ENCODE measurements at regions of chr20 and their contacts with region 1.

Region 1: GRCh38 chr20:59032023-59032712 is at the start of gene ATP5F1E:
- DNase-seq: no peak
- H3K4me3 ChIP-seq: peak within 1 kb of the TSS; percentile 79
- CTCF ChIP-seq: no peak

Region 2: DNA sequence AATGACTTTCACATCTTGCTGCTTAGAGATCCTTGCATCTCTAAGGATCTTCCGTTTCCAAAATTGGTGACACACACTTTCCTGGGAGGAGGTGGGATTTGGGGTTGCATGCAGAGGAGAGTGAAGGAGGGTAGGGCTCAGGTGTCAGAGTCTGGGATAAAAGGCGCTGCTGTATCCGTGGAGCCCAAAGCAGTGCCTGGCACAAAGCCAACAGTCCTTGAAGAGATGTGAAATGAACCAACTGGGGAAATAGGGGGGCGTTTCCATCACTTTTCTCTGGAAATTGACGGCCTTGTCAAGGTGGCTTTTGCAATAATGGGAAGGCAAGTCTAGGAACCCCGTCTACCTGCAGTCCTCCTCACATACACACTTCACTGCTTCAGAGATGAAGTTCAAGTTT is 110.6 kb before region 1 on chr20:
- CTCF ChIA-PET with region 1: no interaction called
- POLR2A ChIA-PET with region 1: no interaction called
- DNase-seq: no peak
- H3K4me3 ChIP-seq: no peak overlapping the region
- CTCF ChIP-seq: no peak

Region 3: DNA sequence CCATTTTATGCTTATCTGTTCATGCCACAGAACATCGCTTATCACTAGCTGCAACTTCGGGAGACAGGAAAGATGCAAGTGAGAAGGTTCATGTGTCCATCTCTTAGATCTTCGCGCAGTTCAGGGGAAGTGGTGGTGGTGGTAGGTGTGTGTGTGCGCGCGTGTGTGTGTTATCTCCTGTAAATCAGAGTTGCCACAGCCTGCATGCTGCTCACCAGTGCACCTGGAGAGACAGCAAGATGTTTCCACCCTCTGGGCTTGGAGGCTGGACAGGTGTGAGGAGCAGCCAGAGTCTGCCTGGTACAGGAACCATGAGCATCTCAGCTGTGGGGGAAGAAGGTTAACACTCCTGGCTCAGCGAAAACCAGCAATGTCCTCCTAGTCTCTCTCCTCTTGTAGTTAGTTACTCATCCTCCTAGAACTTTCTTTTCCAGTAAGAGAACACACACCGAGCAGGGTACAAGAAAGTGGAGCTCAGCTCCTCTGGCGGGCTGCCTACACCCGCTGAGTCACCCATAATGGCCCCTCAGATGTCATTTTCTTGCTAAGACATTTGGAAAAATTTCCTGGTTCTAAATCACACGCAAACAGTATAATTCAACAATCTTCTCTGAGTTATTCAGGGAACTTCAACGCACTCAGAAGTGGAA is 18.1 kb before region 1 on chr20:
- CTCF ChIA-PET with region 1: interaction called, 8 read pairs
- POLR2A ChIA-PET with region 1: interaction called, 10 read pairs
- DNase-seq: no peak
- H3K4me3 ChIP-seq: no peak overlapping the region
- CTCF ChIP-seq: no peak

Region 4: GRCh38 chr20:59101961-59102360 is 69.8 kb after region 1 on chr20:
- CTCF ChIA-PET with region 1: no interaction called
- POLR2A ChIA-PET with region 1: no interaction called
- DNase-seq: no peak
- H3K4me3 ChIP-seq: no peak overlapping the region
- CTCF ChIP-seq: no peak

Region 5: GRCh38 chr20:59149651-59150504 is 117.7 kb after region 1 on chr20:
- CTCF ChIA-PET with region 1: no interaction called
- POLR2A ChIA-PET with region 1: no interaction called
- DNase-seq: no peak
- H3K4me3 ChIP-seq: no peak overlapping the region
- CTCF ChIP-seq: no peak